ENCODE measurements at regions of chr10 and their contacts with region 1.

Region 1: GRCh38 chr10:3785257-3785850 is 345 bp upstream of the KLF6 start:
- DNase-seq: peak; percentile 98 to 99
- H3K4me3 ChIP-seq: peak overlapping the region; percentile 47 to 96 (median 81)
- H3K27ac ChIP-seq: peak overlapping the region; percentile 99 to 100 (median 100)
- H3K4me1 ChIP-seq: peaks cover 14 to 21% of the 10 kb centered on the region in 2 donors
- H3K27me3 ChIP-seq: no peaks in the 10 kb centered on the region
- CTCF ChIP-seq: no peak
- POLR2A ChIP-seq: peak; percentile 99 to 100

Region 2: GRCh38 chr10:3566627-3567026 is 218.7 kb before region 1 on chr10:
- intact Hi-C with region 1: no loop called
- DNase-seq: no peak
- H3K4me3 ChIP-seq: no peak overlapping the region
- H3K27ac ChIP-seq: no peak overlapping the region
- H3K4me1 ChIP-seq: no peaks in the 10 kb centered on the region
- H3K27me3 ChIP-seq: no peaks in the 10 kb centered on the region
- CTCF ChIP-seq: no peak
- POLR2A ChIP-seq: no peak

Region 3: DNA sequence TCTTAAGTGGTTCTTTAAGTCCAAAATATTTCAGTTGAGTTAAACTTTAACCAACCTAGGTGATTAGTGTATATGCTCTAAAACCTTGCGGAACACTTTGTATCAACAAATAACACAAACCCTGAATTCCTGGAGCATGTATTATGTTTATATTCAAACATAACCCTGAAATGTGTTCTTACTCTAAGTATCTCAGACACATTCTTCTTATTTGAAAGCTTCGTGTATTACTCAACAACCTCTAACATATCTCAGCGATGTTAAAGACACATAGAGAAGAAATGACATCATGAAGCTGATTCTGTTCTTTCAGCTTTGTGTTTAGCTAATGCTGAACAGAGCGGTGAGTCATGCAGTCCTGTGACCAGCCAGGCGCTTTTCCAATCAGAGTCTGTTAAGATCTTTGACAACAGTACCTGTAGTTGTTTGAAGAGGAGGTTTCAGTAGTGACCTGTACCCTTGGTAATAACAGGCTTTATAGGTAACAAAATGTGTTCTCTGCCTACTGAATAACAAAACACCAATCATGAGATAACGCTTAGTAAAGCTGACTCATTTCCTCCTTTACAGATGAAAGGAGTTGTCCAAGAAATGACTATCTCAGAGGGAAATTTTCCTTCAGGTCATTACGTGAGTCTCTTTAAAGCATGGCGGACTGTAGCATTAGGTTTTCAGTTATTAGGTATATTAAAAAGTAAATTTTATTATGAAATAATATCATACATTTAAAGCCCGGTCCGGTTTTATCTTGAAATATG is 67.0 kb after region 1 on chr10:
- intact Hi-C with region 1: loop called (anchors 10 kb)
- DNase-seq: peak; percentile 92 to 93
- H3K4me3 ChIP-seq: no peak overlapping the region
- H3K27ac ChIP-seq: peak overlapping the region; percentile 94 to 100 (median 97)
- H3K4me1 ChIP-seq: peaks cover 14 to 35% of the 10 kb centered on the region in 2 donors
- H3K27me3 ChIP-seq: no peaks in the 10 kb centered on the region
- CTCF ChIP-seq: peak in 1 of 6 experiments; percentile 4
- POLR2A ChIP-seq: peak in 1 of 2 donors; percentile 78

Region 4: DNA sequence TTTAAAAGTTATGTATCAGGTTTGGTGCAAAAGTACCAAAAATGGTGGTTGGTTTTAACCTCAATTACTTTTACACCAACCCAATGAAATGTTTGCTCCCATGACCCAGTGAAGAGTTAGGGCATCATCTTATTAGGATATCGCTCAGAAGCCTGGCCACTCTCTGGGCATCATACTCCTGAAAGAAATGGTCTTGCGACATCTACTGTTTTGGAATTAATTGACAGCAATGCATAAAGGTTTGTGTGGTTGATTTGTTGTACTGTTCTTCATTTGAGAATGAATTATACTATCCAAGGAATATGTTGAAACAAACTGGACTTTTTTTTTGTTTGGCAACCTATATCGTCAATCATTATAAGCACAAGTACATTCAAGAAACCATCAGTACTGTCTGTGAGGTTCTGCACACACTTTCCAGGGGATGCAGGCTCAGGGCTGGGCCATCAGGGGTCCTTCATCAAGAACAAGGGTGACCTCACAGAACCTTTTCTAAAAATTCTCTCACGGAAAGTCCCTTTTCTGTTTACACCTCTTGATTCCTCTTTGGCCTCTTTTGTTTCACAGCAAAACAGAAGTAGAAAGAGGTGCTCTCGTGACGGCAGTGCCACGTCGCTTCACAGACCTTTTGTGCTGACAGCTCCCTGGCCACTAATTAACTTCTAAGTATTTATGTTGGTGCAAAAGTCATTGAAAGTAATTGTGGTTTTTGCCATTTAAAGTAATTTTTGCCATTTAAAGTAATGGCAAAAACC is 116.9 kb after region 1 on chr10:
- intact Hi-C with region 1: no loop called
- DNase-seq: no peak
- H3K4me3 ChIP-seq: no peak overlapping the region
- H3K27ac ChIP-seq: peak overlapping the region in 2 of 3 donors; percentile 7 to 34
- H3K4me1 ChIP-seq: peaks cover 1 to 21% of the 10 kb centered on the region in 2 donors
- H3K27me3 ChIP-seq: no peaks in the 10 kb centered on the region
- CTCF ChIP-seq: no peak
- POLR2A ChIP-seq: no peak

Region 5: GRCh38 chr10:3935141-3935540 is 149.8 kb after region 1 on chr10:
- intact Hi-C with region 1: loop called (anchors 10 kb)
- DNase-seq: peak; percentile 61 to 63
- H3K4me3 ChIP-seq: no peak overlapping the region
- H3K27ac ChIP-seq: peak overlapping the region; percentile 53 to 96 (median 83)
- H3K4me1 ChIP-seq: peaks cover 9 to 24% of the 10 kb centered on the region in 2 donors
- H3K27me3 ChIP-seq: no peaks in the 10 kb centered on the region
- CTCF ChIP-seq: peak in 1 of 6 experiments; percentile 14
- POLR2A ChIP-seq: peak in 1 of 2 donors; percentile 54

Region 6: DNA sequence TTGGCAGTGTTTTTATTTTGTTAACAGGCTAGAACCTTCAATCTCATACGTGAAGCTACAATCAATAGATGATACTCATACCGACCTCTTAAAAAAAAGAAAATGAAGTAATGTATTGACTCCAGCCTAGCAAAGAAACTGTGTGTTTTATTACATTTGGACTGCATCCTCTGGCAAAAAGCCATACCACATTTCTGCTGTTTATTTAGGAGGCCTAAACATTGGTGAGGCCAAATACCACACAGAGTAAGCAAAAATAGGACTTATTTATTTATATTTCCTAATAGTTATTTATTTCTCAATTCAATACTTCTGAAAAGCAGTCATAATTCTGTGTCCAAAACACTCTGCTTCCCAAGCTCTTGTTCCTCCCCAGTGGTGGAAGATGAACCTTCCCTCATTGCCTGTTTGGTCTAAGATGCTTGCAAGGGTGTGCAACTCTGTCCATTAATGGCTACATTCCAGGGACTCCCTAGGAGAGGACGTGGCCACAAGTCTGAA is 398.5 kb after region 1 on chr10:
- intact Hi-C with region 1: no loop called
- DNase-seq: no peak
- H3K4me3 ChIP-seq: no peak overlapping the region
- H3K27ac ChIP-seq: no peak overlapping the region
- H3K4me1 ChIP-seq: no peaks in the 10 kb centered on the region
- H3K27me3 ChIP-seq: no peaks in the 10 kb centered on the region
- CTCF ChIP-seq: no peak
- POLR2A ChIP-seq: no peak

Region 7: DNA sequence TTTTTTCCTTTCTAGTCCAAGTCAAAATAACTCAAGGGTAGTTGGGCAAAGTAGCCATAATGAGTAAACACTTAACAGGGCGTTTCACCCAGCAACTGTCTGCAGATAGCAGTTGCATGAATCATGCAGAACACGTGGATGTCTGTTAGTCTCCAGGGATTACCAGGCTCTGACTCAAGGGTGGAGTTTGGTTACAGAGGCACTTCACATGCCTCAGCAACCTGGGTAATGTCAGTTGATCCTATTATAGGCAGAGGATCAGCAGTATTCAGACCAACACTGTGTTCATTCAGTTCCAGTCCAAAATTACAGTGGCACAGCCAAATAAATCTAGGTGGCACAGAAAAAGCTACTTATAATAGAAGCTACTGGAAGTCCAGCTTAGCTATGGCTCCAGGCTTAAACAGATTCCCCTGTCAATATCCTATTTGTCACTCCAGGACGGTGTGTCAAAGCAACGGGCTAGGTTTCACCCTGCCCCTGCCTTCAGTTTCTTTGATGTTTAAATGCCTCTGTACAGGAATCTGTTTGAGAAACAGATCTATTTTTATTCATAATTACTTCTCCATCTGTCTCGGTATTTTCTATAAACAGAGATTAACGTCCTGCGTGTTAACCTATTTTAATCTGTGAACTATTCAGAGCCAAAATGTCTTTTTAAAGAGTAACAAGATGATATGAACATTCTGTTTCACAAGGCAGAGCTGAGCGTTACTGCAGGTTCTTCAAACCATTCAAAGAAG is 878.0 kb after region 1 on chr10:
- intact Hi-C with region 1: loop called (anchors 10 kb)
- DNase-seq: peak; percentile 80
- H3K4me3 ChIP-seq: no peak overlapping the region
- H3K27ac ChIP-seq: peak overlapping the region; percentile 79 to 88 (median 83)
- H3K4me1 ChIP-seq: peaks cover 17 to 40% of the 10 kb centered on the region in 2 donors
- H3K27me3 ChIP-seq: no peaks in the 10 kb centered on the region
- CTCF ChIP-seq: no peak
- POLR2A ChIP-seq: peak in 1 of 2 donors; percentile 55